Activated T-helper 1 cell treated with anti-CD3 and anti-CD28 coated beads, Interleukin-12 subunit alpha, Interleukin-12 subunit beta, Interleukin-2, Interleukin-4 antibody, amounts not matched to agents 30 ng/mL and 10 ng/mL and 1 ng/mL, durations not matched to agents 14 hours and 24 hours and 36 hours (primary cell): ENCODE measurements at regions of chr11 and their contacts with region 1.

Region 1: GRCh38 chr11:88103337-88104206 is 71.7 kb downstream of the RAB38 start:
- DNase-seq: peak; percentile 16
- H3K4me3 Mint-ChIP-seq: no peak overlapping the region
- H3K27ac Mint-ChIP-seq: no peak overlapping the region
- H3K4me1 Mint-ChIP-seq: no peaks in the 10 kb centered on the region
- H3K27me3 Mint-ChIP-seq: peaks cover 16% of the 10 kb centered on the region

Region 2: DNA sequence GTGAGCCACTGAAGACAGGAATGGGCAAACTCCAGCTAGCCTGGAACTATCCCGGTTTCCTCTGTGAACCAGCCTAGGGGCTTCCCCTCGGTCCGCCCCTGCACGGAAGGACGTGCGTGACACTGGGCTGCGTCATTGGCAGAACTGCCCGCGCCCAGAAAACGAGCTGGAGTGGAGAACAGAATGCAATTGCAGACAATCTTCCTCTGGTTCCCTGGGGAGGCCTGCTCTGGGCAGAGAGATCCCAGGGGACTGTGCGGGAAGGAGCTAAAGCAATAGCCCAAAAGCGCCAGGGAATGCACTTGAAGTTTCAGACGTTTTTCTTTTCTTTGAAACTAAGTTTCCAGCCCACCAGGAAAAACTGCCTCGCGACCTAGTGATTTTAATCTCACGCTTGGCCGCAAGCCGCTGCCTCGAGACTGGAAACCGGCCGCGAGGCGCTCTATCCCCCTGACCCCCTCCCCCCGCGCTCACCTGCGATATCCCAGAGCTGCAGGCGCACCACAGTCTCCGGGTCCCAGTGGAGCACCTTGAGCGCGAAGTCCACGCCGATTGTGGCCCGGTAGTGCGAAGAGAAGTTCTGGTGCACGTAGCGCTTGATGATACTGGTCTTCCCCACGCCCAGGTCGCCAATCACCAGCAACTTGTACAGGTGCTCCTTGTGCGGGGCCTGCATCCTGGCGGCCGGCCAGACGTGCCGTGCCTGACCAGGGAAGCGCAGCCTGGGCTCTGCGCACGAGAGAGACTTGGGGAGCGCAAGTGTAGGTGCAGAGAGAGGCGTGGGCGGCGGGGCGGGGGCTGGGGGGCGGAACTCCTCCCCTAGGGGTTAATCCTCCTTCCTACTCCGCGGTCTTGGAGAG is 71.4 kb after region 1 on chr11 and contains the start of gene RAB38:
- intact Hi-C with region 1: loop called (anchors 5 kb)
- DNase-seq: peak; percentile 32
- H3K4me3 Mint-ChIP-seq: peak within 1 kb of the TSS; percentile 83
- H3K27ac Mint-ChIP-seq: peak within 1 kb of the TSS; percentile 73
- H3K4me1 Mint-ChIP-seq: peaks cover 52% of the 10 kb centered on the region
- H3K27me3 Mint-ChIP-seq: no peaks in the 10 kb centered on the region
- total RNA-seq, gene RAB38: 2.0 and 2.8 TPM in 2 replicates

Region 3: DNA sequence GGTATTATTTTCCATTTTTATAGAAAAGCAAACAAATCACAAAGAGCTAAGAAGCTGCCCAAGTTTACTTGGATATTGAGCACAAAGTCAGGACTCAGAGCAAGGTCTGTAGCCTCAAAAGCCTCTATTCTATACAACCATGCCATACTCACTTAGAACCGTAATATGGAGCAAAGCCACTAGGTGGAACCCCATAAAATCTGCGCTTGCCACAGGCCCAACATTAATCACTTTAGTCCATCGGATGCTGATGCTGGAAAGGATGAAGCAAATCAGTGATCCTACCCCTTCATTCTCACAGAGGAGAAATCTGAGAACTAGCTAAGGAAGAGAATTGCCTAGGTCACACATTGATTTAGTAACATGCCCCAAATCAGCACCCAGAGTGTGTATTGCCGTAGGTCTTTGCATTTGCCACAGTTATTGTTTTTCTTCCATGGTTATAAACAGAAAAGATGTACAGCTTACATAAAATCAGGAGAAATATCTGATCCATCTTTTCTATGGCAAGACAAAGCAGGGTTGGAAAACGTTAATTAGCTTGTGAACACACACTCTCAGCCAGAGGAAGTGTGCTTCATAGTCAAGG is 128.4 kb after region 1 on chr11:
- intact Hi-C with region 1: loop called (anchors 10 kb)
- DNase-seq: peak; percentile 1
- H3K4me3 Mint-ChIP-seq: no peak overlapping the region
- H3K27ac Mint-ChIP-seq: no peak overlapping the region
- H3K4me1 Mint-ChIP-seq: no peaks in the 10 kb centered on the region
- H3K27me3 Mint-ChIP-seq: peaks cover 2% of the 10 kb centered on the region

Region 4: DNA sequence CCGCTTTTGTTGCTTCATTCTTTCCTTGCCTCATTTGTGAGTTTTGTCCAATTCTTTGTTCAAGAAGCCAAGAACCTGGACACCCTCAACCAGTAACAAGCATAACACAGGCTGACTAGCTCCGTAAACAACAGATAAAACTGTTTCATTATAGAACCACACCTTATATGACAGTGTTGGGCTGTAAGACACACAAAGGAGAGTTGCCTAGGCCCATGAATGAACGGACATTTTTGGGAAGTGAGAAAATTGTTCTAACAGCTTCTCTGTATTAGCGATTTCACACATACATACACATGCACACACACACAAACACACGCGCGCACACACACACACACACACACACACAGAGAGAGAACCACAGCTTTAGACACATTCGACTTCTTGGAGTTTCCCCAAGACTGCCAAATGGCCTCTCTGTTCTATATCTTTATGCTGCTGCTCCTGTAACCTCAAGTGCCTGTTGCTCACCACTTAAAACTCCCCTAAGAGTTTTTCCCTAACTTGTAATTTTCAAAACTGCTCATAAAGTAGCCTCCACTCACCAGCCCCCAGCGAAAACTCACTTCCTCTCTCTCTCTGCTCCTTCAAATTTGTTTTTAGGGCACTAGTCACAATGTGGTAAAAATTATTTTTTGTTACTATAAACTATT is 198.0 kb after region 1 on chr11:
- intact Hi-C with region 1: loop called (anchors 10 kb)
- DNase-seq: no peak
- H3K4me3 Mint-ChIP-seq: peak overlapping the region; percentile 1
- H3K27ac Mint-ChIP-seq: peak overlapping the region; percentile 95
- H3K4me1 Mint-ChIP-seq: peaks cover 50% of the 10 kb centered on the region
- H3K27me3 Mint-ChIP-seq: no peaks in the 10 kb centered on the region